ENCODE measurements at regions of chr2 and their contacts with region 1.

Region 1: GRCh38 chr2:21175895-21176646 is 52.3 kb downstream of the TDRD15 start:
- DNase-seq: no peak
- H3K4me3 ChIP-seq: no peak overlapping the region
- H3K27ac ChIP-seq: no peak overlapping the region
- H3K4me1 ChIP-seq: peaks cover 0 to 5% (median 3%) of the 10 kb centered on the region in 4 donors
- H3K27me3 ChIP-seq: no peaks in the 10 kb centered on the region
- CTCF ChIP-seq: peak; percentile 6 to 32 (median 27)
- EP300 ChIP-seq: no peak
- POLR2A ChIP-seq: no peak

Region 2: DNA sequence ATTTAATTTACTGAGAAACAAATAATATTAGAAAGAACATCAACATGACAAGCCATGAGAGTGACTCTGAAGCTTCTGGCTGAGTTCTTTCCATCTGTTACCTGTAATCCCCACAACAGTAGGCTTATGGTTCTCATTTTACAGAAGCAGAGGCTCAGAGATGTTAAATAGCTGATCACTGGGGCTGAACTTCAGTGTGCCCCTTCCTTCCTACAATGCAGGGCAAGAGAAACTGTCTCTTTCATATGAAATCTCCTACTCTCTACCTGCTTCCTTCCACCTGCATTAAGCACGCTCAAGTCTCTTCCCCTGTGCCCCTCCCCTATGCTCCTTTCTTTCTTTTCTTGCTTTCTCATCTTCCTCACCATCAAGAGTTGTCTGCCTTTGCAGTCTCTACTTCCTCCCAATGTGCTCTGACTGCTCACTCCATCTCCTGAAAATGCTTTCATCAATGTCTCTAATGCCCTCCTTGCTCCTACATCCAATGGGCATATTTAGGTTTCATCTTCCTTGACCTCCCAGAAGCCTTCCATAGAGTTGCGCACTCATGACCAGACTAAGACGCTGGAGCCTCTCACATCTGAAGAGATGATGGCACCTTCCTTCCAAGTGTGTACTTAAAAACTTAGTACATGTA is 155.9 kb before region 1 on chr2:
- intact Hi-C with region 1: no loop called
- DNase-seq: no peak
- H3K4me3 ChIP-seq: no peak overlapping the region
- H3K27ac ChIP-seq: no peak overlapping the region
- H3K4me1 ChIP-seq: no peaks in the 10 kb centered on the region
- H3K27me3 ChIP-seq: no peaks in the 10 kb centered on the region
- CTCF ChIP-seq: no peak
- EP300 ChIP-seq: no peak
- POLR2A ChIP-seq: no peak

Region 3: GRCh38 chr2:21317131-21317530 is 141.1 kb after region 1 on chr2:
- intact Hi-C with region 1: loop called (anchors 2 kb)
- DNase-seq: peak; percentile 82
- H3K4me3 ChIP-seq: no peak overlapping the region
- H3K27ac ChIP-seq: no peak overlapping the region
- H3K4me1 ChIP-seq: no peaks in the 10 kb centered on the region
- H3K27me3 ChIP-seq: no peaks in the 10 kb centered on the region
- CTCF ChIP-seq: peak; percentile 42 to 65 (median 60)
- EP300 ChIP-seq: no peak
- POLR2A ChIP-seq: no peak

Measured in esophagus muscularis mucosa (tissue), 4 donors.